Heart right ventricle (tissue), 16 donors: ENCODE measurements at regions of chr19 and their contacts with region 1.

Region 1: DNA sequence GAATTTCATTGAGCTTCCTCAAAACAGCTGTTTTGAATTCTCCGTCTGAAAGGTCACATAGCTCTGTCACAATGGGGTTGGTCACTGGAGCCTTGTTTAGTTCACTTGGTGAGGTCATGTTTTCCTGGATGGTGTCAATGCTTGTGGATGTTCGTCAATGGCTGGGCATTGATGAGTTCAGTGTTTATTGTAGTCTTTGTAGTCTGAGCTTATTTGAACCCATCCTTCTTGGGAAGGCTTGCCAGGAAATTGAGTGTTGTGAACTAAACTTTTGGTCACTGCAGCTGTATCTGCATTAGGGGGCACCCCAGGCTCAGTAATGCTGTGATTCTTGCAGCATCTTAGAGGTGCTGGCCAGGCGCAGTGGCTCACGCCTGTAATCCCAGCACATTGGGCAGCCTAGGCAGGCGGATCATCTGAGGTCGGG is 22.0 kb downstream of the BLOC1S3 start:
- DNase-seq: peak; percentile 21 to 31
- ATAC-seq: peak in 7 of 8 donors; percentile 61 to 82 (median 76)
- H3K4me3 ChIP-seq: no peak overlapping the region
- H3K27ac ChIP-seq: no peak overlapping the region
- H3K4me1 ChIP-seq: peaks cover 0 to 6% (median 0%) of the 10 kb centered on the region in 9 donors
- H3K27me3 ChIP-seq: no peaks in the 10 kb centered on the region
- CTCF ChIP-seq: peak in 8 of 9 donors; percentile 22 to 63 (median 52)

Region 2: GRCh38 chr19:45245334-45245787 is 44.8 kb after region 1 on chr19 and contains the start of gene EXOC3L2:
- intact Hi-C with region 1: loop called in 6 of 10 experiments (anchors 2 to 10 kb)
- DNase-seq: peak; percentile 49 to 70
- ATAC-seq: peak; percentile 47 to 86 (median 70)
- H3K4me3 ChIP-seq: peak within 1 kb of the TSS in 8 of 10 donors; percentile 12 to 43 (median 38)
- H3K27ac ChIP-seq: peak within 1 kb of the TSS; percentile 19 to 80 (median 46)
- H3K4me1 ChIP-seq: peaks cover 2 to 41% (median 14%) of the 10 kb centered on the region in 9 donors
- H3K27me3 ChIP-seq: no peaks in the 10 kb centered on the region
- CTCF ChIP-seq: no peak
- total RNA-seq, gene EXOC3L2: 0.27 to 2.0 (median 1.1) TPM

Region 3: GRCh38 chr19:45250832-45251451 is 50.4 kb after region 1 on chr19 and contains the start of gene MARK4:
- intact Hi-C with region 1: loop called in 6 of 10 experiments (anchors 2 to 10 kb)
- DNase-seq: peak; percentile 52 to 64
- ATAC-seq: peak; percentile 36 to 84 (median 56)
- H3K4me3 ChIP-seq: peak within 1 kb of the TSS; percentile 67 to 98 (median 89)
- H3K27ac ChIP-seq: peak within 1 kb of the TSS in 9 of 10 donors; percentile 22 to 87 (median 82)
- H3K4me1 ChIP-seq: peaks cover 14 to 58% (median 36%) of the 10 kb centered on the region in 9 donors
- H3K27me3 ChIP-seq: no peaks in the 10 kb centered on the region
- CTCF ChIP-seq: no peak
- total RNA-seq, gene MARK4: 24.8 to 45.3 (median 33.7) TPM

Region 4: DNA sequence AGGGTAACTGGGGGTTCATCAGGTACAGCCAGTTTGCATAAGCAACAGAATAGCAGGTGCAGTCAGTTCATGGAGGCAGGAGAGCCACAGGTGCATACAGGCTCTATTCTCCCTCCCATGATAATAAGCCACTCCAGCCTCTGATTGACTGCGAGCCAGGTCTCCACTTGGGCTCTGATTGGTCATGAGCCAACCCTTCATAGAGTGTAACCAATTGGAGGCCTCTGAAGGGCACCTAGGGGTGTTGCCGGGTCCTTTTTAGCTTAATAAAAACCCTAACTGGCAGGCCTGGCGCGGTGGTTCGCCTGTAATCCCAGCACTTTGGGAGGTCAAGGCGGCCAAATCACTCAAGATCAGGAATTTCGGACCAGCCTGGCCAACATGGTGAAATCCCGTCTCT is 130.8 kb after region 1 on chr19:
- intact Hi-C with region 1: loop called in 2 of 10 experiments (anchors 5 to 10 kb)
- DNase-seq: no peak
- ATAC-seq: no peak
- H3K4me3 ChIP-seq: no peak overlapping the region
- H3K27ac ChIP-seq: no peak overlapping the region
- H3K4me1 ChIP-seq: peaks cover 0 to 1% (median 0%) of the 10 kb centered on the region in 9 donors
- H3K27me3 ChIP-seq: no peaks in the 10 kb centered on the region
- CTCF ChIP-seq: no peak

Region 5: GRCh38 chr19:45340232-45340898 is 139.8 kb after region 1 on chr19 and contains the start of gene KLC3:
- intact Hi-C with region 1: loop called in 4 of 10 experiments (anchors 1 to 10 kb)
- DNase-seq: no peak
- ATAC-seq: peak in 1 of 8 donors; percentile 34
- H3K4me3 ChIP-seq: peak within 1 kb of the TSS in 8 of 10 donors; percentile 17 to 34 (median 30)
- H3K27ac ChIP-seq: no peak within 1 kb of the TSS
- H3K4me1 ChIP-seq: peaks cover 0 to 10% (median 5%) of the 10 kb centered on the region in 9 donors
- H3K27me3 ChIP-seq: peaks cover 6 to 39% (median 29%) of the 10 kb centered on the region in 7 donors
- CTCF ChIP-seq: no peak
- total RNA-seq, gene KLC3: 0.14 TPM in 2 of 10 donors, not detected in the others